ENCODE measurements at regions of chr6 and their contacts with region 1.

Region 1: DNA sequence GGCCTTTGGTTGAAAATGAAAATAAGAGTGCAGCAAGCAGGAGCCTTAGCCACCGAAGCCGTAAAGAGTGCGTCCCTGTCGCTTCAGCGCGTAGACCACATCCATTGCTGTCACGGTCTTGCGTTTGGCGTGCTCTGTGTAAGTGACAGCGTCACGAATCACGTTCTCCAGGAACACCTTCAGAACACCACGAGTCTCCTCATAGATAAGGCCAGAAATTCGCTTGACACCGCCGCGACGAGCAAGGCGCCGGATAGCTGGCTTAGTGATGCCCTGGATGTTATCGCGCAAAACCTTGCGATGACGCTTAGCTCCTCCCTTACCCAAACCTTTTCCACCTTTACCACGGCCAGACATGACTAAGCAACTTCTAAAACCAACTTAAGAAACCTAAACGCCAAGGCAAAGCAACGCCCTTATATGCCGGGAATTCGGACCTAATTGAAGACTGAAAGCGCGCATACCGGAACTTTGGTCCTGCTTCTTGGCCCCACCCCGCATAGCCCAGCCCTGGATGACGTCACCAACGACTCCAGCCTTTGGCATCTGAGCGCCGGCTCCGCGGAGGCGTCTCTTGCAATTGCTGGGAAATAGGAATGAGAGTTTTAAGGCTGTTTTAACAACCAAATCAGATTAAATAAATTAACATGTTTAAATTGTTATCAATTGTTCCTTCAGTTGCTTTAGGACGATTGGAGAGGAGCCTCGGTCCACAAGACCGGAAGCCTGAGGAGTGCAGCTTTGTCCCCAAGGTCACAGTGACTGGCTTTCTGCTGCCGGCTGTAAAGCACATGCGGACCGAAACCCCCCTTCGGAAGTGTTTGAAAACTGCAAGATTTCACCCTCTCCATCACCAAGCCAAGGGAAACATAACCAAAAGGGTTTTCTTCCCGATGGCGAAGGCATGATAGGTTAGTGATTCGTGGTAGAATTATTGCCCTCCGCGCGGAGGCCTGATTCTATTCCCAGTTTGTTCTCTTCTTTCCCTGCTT is 79.6 kb upstream of the BTN3A2 start:
- DNase-seq: peak; percentile 79
- CTCF ChIP-seq: no peak

Region 2: DNA sequence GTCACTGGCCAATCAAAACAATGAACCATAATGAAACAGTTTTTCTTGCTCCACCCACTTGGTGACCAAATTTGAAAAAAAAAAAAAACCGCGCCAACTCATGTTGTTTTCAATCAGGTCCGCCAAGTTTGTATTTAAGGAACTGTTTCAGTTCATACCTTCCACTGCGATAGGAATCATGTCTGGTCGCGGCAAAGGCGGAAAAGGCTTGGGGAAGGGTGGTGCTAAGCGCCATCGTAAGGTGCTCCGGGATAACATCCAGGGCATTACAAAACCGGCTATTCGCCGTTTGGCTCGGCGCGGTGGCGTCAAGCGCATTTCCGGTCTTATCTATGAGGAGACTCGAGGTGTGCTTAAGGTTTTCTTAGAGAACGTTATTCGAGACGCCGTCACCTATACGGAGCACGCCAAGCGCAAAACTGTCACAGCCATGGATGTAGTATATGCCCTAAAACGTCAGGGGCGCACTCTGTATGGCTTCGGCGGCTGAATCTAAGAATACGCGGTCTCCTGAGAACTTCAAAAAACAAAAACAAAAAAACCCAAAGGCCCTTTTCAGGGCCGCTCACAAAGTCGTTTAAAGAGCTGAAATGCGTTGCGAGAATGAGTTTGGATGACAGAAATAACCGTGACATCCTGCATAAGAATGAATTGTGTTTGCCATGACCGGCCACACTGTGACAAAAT is 181.5 kb before region 1 on chr6:
- CTCF ChIA-PET with region 1: no interaction called
- POLR2A ChIA-PET with region 1: no interaction called
- DNase-seq: peak; percentile 78
- CTCF ChIP-seq: peak; percentile 52

Region 3: DNA sequence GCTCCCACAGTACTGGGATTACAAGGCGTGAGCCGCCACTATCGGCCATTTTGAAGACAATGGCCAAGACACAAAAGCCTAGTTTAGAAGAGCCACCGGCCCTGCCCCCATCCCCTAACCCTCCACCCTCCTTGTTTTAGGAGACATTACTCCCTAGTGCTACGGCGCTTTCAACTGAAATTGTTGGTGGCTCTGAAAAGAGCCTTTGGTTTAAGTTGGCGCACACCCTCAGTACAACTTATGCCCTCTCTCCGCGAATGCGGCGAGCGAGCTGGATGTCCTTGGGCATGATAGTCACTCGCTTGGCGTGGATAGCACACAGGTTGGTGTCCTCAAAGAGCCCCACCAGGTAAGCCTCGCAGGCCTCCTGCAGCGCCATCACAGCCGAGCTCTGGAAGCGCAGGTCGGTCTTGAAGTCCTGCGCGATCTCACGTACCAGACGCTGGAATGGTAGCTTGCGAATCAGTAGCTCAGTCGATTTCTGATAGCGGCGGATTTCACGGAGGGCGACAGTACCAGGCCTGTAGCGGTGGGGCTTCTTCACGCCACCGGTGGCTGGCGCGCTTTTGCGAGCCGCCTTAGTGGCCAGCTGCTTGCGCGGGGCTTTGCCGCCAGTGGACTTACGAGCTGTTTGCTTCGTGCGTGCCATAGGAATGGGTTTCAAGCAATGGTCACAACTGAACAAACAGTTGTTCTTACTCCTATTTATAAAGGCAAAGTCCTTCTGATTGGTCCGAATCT is 35.3 kb before region 1 on chr6:
- CTCF ChIA-PET with region 1: interaction called, 7 read pairs
- POLR2A ChIA-PET with region 1: interaction called, 19 read pairs
- DNase-seq: no peak
- CTCF ChIP-seq: peak; percentile 59

Region 4: GRCh38 chr6:26316291-26316690 is 30.9 kb after region 1 on chr6:
- CTCF ChIA-PET with region 1: no interaction called
- POLR2A ChIA-PET with region 1: no interaction called
- DNase-seq: no peak
- CTCF ChIP-seq: no peak